ENCODE measurements at regions of chr5 and their contacts with region 1.

Region 1: DNA sequence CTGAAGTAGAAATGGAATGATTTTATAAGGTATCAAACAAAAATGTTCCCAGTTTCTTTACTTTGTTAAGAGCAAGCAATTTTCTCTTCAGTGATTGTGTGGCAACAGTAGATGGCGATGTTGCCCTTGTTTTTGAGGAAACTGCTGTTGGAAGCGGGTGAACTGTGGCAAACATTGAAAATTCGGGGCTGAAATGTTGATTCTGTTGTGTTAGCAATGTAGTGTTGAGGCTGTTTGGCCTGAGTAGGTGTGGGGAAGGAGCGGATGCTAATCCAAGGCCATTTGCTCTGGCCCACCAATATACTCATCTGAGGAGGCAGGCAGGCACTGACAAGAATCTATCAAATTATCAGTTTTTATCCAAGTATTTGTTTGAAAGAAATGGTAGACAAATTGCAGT is 129.8 kb downstream of the SLC12A2 start:
- DNase-seq: peak; percentile 81
- H3K4me3 ChIP-seq: no peak overlapping the region
- H3K27ac ChIP-seq: no peak overlapping the region
- H3K4me1 ChIP-seq: no peaks in the 10 kb centered on the region
- H3K27me3 ChIP-seq: no peaks in the 10 kb centered on the region
- CTCF ChIP-seq: peak; percentile 53 to 71 (median 58)
- POLR2A ChIP-seq: no peak

Region 2: DNA sequence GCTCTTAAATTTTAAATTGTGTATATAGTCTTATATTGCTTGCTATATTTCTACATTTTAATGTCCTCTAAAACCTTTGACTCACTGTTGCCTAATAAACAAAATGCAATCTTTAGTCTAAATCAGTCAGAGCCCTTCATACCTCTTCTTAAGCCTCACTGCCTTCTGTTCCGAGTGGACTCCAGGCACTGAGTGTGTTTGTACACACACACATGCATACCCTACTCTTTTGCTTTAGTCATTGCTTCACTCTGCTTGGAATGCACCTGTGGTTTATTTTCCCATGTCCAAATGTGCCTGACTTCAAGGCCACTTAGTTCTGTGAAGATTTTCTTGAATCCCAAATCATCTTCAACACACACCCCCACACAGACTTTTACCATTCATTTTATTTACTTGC is 68.8 kb before region 1 on chr5:
- intact Hi-C with region 1: no loop called
- DNase-seq: no peak
- H3K4me3 ChIP-seq: no peak overlapping the region
- H3K27ac ChIP-seq: no peak overlapping the region
- H3K4me1 ChIP-seq: no peaks in the 10 kb centered on the region
- H3K27me3 ChIP-seq: no peaks in the 10 kb centered on the region
- CTCF ChIP-seq: no peak
- POLR2A ChIP-seq: no peak

Region 3: DNA sequence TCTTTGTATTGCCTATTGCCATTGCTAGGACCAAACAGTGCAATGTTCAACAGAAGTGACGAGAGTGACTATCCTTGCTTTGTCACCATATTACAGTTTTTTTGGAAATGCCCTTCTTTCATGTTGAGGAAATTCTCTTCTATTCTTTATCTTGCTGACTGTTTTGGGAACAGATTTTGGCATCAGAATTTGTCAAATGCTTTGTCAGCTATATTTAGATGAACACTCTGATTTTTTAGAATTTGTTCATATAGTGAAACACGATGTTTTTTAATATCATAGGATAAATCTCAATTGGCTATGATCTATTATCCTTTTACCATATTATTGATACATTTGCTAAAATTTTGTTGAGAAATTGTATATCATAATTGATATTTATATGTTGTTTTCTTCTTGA is 293.3 kb after region 1 on chr5:
- intact Hi-C with region 1: loop called (anchors 10 kb)
- DNase-seq: no peak
- H3K4me3 ChIP-seq: no peak overlapping the region
- H3K27ac ChIP-seq: no peak overlapping the region
- H3K4me1 ChIP-seq: no peaks in the 10 kb centered on the region
- H3K27me3 ChIP-seq: no peaks in the 10 kb centered on the region
- CTCF ChIP-seq: no peak
- POLR2A ChIP-seq: no peak

Region 4: DNA sequence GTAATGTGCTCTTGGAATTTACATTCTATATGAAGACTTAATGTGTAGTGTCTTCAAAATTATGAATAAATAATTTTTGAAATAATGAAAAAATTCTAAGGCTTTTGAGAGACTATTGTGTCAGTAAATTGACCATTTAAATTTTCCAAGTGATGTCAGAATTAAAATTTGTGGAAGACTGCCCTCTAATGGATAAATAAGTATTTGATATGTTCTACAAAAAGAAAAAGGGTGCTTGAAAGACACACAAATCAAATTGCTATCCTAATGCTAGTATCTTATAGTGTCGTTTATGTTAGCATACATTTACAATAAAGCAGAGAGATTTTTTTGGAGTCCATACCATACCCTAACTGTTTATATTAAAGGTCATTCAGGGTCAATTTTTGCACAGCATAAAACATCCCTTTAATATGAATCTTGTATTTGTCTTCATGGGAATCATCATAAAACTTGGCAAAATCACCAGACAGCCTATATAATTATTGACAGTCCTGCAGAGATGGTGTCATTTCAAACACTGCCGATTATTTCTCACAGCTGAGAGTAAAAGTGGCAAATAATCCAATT is 631.1 kb after region 1 on chr5:
- intact Hi-C with region 1: loop called (anchors 10 kb)
- DNase-seq: no peak
- H3K4me3 ChIP-seq: no peak overlapping the region
- H3K27ac ChIP-seq: no peak overlapping the region
- H3K4me1 ChIP-seq: no peaks in the 10 kb centered on the region
- H3K27me3 ChIP-seq: no peaks in the 10 kb centered on the region
- CTCF ChIP-seq: peak in 1 of 3 experiments; percentile 44
- POLR2A ChIP-seq: no peak

Measured in testis (tissue), 5 donors.